Gastrocnemius medialis (tissue), 4 donors: ENCODE measurements at regions of chr9 and their contacts with region 1.

Region 1: DNA sequence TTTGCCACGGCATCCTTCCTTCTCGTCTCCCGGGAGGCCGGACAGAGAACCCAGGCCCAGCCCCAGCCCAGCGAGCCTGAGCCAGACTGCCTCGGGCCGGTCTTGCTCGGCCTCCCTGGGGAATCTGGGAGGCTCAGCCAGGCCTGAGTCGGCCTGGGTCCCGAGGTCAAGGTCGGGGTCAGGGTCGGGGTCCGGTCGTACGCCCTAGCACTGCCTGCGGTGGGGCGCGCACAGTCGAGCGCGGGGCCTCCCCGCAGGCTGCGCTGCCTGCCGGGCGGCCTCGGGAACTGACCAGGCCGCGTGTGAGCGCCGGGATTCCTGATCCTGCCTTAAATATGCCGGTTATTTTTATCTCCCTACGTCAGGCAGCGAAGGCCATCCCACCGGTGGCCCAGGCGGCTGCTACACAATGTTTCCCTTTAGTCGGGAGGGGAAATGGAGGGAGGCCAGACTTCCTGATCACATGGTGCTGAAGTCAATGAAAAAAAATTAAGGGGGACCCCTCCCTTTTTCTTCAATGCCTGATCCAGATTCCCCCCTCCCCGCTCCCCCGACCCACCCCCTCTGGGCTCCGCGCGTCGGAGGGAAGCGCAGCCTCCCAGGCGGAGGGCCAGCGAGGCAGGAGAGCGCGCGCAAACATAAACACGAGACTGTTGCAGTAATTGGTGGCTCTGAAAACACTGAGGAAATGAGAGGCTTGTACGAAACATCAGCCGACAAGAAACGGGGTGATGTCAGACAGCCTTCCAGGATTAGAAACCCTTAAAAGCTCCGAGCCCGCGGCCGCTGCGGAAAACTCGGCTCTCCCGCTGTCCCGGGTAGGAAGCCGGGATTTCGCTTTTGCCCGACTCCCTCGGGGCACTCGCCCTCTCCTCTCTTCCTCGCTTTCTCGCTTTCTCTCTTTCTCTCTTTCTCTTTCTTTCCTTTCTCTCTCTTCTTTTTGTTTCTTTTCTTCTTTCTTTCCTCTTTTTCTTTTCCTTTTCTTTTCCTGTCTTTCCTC is 148.2 kb upstream of the KLF4 start:
- DNase-seq: peak; percentile 87 to 93
- ATAC-seq: peak; percentile 89 to 91
- H3K4me3 ChIP-seq: peak overlapping the region; percentile 56 to 65 (median 56)
- H3K27ac ChIP-seq: peak overlapping the region; percentile 94 to 97 (median 96)
- H3K4me1 ChIP-seq: peaks cover 18 to 19% of the 10 kb centered on the region in 2 donors
- H3K27me3 ChIP-seq: no peaks in the 10 kb centered on the region
- CTCF ChIP-seq: peak; percentile 22 to 44 (median 27)
- POLR2A ChIP-seq: peak; percentile 98 to 99

Region 2: GRCh38 chr9:108053555-108054061 is 415.9 kb after region 1 on chr9:
- in situ Hi-C with region 1: loop called in 1 of 4 experiments (anchors 25 kb)
- intact Hi-C with region 1: no loop called
- DNase-seq: peak; percentile 68 to 73
- ATAC-seq: peak; percentile 72 to 84
- H3K4me3 ChIP-seq: peak overlapping the region; percentile 7 to 48 (median 22)
- H3K27ac ChIP-seq: peak overlapping the region; percentile 43 to 74 (median 63)
- H3K4me1 ChIP-seq: peaks cover 38 to 41% of the 10 kb centered on the region in 2 donors
- H3K27me3 ChIP-seq: no peaks in the 10 kb centered on the region
- CTCF ChIP-seq: no peak
- POLR2A ChIP-seq: no peak